ENCODE measurements at regions of chrX and their contacts with region 1.

Region 1: GRCh38 chrX:14872851-14873675 is at the starts of genes FANCB and MOSPD2:
- DNase-seq: peak; percentile 85 to 97 (median 92)
- ATAC-seq: peak; percentile 89
- H3K4me3 ChIP-seq: peak within 1 kb of the TSS; percentile 81 to 83
- H3K4me3 Mint-ChIP-seq: peak within 1 kb of the TSS; percentile 84
- H3K27ac ChIP-seq: peak within 1 kb of the TSS; percentile 79 to 86
- H3K27ac Mint-ChIP-seq: peak within 1 kb of the TSS; percentile 92
- H3K4me1 ChIP-seq: peaks cover 9% of the 10 kb centered on the region
- H3K4me1 Mint-ChIP-seq: peaks cover 21% of the 10 kb centered on the region
- H3K27me3 ChIP-seq: no peaks in the 10 kb centered on the region
- H3K27me3 Mint-ChIP-seq: no peaks in the 10 kb centered on the region
- CTCF ChIP-seq: no peak
- total RNA-seq, gene FANCB: 2.5 to 3.1 TPM
- total RNA-seq, gene MOSPD2: 4.2 to 4.6 TPM

Region 2: DNA sequence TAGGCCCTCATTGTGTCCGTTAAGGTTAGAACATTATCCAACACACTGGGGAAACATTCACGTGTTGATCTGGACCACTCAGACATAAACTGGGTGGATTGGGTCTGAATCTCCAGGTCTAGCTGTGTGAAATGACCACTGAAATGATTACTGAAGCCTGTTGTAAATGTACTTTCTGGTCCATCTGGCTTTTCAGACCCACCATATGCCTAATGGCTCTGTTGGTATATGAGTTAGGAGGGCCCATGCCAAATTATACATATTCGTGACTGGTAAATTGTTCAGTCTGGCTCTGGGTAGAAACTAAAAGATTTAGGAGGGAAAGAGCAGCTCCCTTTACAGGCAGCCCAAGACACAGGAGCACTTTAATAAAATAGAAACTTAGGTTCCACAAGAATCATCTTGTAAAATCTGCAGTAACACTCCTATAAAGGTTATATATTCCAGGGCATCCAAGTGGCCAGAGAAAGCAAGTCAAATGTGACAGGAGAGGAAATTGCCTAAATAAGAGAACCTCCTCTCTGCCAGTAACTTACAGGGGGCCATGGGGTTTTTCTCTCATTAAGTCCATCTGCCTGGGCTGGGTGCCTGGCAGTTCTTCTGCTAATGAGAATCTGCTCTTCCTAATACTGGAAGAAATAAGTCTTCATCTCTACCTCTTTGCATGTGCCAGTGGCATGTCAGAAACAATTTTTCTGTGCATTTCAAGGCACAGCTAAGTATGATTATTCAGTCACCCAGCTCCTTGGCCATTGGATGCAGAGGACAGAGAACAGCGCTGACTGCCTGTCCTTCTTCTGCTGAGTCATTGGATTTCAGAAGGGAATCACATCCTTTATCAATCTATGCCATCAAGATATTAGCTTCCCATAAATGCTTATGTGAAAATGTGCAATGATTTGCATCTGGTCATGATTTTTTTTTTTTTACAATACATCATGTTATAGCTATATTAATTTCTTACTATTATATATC is 231.1 kb before region 1 on chrX:
- CTCF ChIA-PET with region 1: no interaction called
- POLR2A ChIA-PET with region 1: no interaction called
- intact Hi-C with region 1: no loop called
- DNase-seq: no peak
- ATAC-seq: no peak
- H3K4me3 ChIP-seq: no peak overlapping the region
- H3K4me3 Mint-ChIP-seq: no peak overlapping the region
- H3K27ac ChIP-seq: no peak overlapping the region
- H3K27ac Mint-ChIP-seq: no peak overlapping the region
- H3K4me1 ChIP-seq: no peaks in the 10 kb centered on the region
- H3K4me1 Mint-ChIP-seq: no peaks in the 10 kb centered on the region
- H3K27me3 ChIP-seq: no peaks in the 10 kb centered on the region
- H3K27me3 Mint-ChIP-seq: no peaks in the 10 kb centered on the region
- CTCF ChIP-seq: no peak

Region 3: GRCh38 chrX:14963447-14964236 is 90.6 kb after region 1 on chrX:
- CTCF ChIA-PET with region 1: no interaction called
- POLR2A ChIA-PET with region 1: no interaction called
- intact Hi-C with region 1: no loop called
- DNase-seq: no peak
- ATAC-seq: no peak
- H3K4me3 ChIP-seq: no peak overlapping the region
- H3K4me3 Mint-ChIP-seq: no peak overlapping the region
- H3K27ac ChIP-seq: no peak overlapping the region
- H3K27ac Mint-ChIP-seq: no peak overlapping the region
- H3K4me1 ChIP-seq: no peaks in the 10 kb centered on the region
- H3K4me1 Mint-ChIP-seq: no peaks in the 10 kb centered on the region
- H3K27me3 ChIP-seq: no peaks in the 10 kb centered on the region
- H3K27me3 Mint-ChIP-seq: no peaks in the 10 kb centered on the region
- CTCF ChIP-seq: no peak

Region 4: GRCh38 chrX:15160558-15161095 is 287.6 kb after region 1 on chrX:
- CTCF ChIA-PET with region 1: no interaction called
- POLR2A ChIA-PET with region 1: no interaction called
- intact Hi-C with region 1: loop called in 1 of 2 experiments (anchors 10 kb)
- DNase-seq: no peak
- ATAC-seq: no peak
- H3K4me3 ChIP-seq: no peak overlapping the region
- H3K4me3 Mint-ChIP-seq: no peak overlapping the region
- H3K27ac ChIP-seq: no peak overlapping the region
- H3K27ac Mint-ChIP-seq: no peak overlapping the region
- H3K4me1 ChIP-seq: peaks cover 18% of the 10 kb centered on the region
- H3K4me1 Mint-ChIP-seq: peaks cover 37% of the 10 kb centered on the region
- H3K27me3 ChIP-seq: no peaks in the 10 kb centered on the region
- H3K27me3 Mint-ChIP-seq: no peaks in the 10 kb centered on the region
- CTCF ChIP-seq: no peak

Region 5: DNA sequence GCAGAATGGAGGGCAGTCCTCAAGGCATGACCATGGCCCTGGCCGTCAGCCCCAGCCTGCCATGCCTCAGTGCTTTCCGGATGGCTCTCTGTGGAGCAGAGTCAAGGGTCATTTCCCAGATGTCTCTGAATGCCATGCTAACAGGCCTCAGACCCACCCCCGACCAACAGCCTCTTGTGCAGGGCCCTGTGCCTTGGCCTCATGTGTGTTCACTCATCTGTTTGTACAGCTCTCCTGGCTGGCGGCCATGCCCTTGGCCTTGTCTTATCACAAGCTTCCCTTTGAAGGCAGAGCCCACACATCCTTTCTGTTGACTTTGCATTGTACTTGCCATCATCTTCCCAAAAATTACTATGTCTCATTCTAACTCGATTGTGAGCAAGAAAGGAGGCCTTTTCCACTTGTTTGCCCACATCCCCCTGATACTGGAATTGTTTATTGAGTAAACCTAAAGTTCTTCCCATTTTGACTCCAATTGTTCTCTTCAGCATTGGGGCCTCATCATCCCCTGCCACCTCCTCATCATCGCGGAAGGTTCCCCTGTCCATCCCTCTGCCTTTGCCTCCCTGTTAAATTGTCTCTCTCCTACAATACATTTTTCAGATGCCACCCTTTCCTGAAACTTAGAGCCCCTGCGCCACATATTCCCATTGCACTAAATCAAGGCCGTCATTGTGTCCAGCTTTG is 871.3 kb after region 1 on chrX:
- CTCF ChIA-PET with region 1: no interaction called
- POLR2A ChIA-PET with region 1: no interaction called
- intact Hi-C with region 1: loop called in 1 of 2 experiments (anchors 5 kb)
- DNase-seq: no peak
- ATAC-seq: no peak
- H3K4me3 ChIP-seq: no peak overlapping the region
- H3K4me3 Mint-ChIP-seq: no peak overlapping the region
- H3K27ac ChIP-seq: peak overlapping the region in 1 of 2 experiments; percentile 14
- H3K27ac Mint-ChIP-seq: peak overlapping the region; percentile 83
- H3K4me1 ChIP-seq: peaks cover 20% of the 10 kb centered on the region
- H3K4me1 Mint-ChIP-seq: peaks cover 72% of the 10 kb centered on the region
- H3K27me3 ChIP-seq: no peaks in the 10 kb centered on the region
- H3K27me3 Mint-ChIP-seq: no peaks in the 10 kb centered on the region
- CTCF ChIP-seq: no peak

Region 6: GRCh38 chrX:16786139-16786790 is 1913.2 kb after region 1 on chrX and contains the start of gene TXLNG:
- CTCF ChIA-PET with region 1: no interaction called
- POLR2A ChIA-PET with region 1: no interaction called
- intact Hi-C with region 1: loop called in 1 of 2 experiments (anchors 10 kb)
- DNase-seq: peak; percentile 83 to 98 (median 94)
- ATAC-seq: peak; percentile 91
- H3K4me3 ChIP-seq: peak within 1 kb of the TSS; percentile 54 to 68
- H3K4me3 Mint-ChIP-seq: peak within 1 kb of the TSS; percentile 96
- H3K27ac ChIP-seq: peak within 1 kb of the TSS; percentile 88 to 91
- H3K27ac Mint-ChIP-seq: peak within 1 kb of the TSS; percentile 87
- H3K4me1 ChIP-seq: peaks cover 4% of the 10 kb centered on the region
- H3K4me1 Mint-ChIP-seq: peaks cover 25% of the 10 kb centered on the region
- H3K27me3 ChIP-seq: no peaks in the 10 kb centered on the region
- H3K27me3 Mint-ChIP-seq: no peaks in the 10 kb centered on the region
- CTCF ChIP-seq: no peak
- total RNA-seq, gene TXLNG: 31.3 to 32.3 TPM

Measured in CD8-positive, alpha-beta T cell (primary cell).